Breast epithelium (tissue), 4 donors: ENCODE measurements at regions of chr18 and their contacts with region 1.

Region 1: GRCh38 chr18:57190026-57190425 is 43.1 kb downstream of the BOD1L2 start:
- DNase-seq: no peak
- H3K4me3 ChIP-seq: no peak overlapping the region
- H3K27ac ChIP-seq: no peak overlapping the region
- H3K4me1 ChIP-seq: no peaks in the 10 kb centered on the region
- H3K27me3 ChIP-seq: no peaks in the 10 kb centered on the region
- CTCF ChIP-seq: no peak
- POLR2A ChIP-seq: no peak

Region 2: DNA sequence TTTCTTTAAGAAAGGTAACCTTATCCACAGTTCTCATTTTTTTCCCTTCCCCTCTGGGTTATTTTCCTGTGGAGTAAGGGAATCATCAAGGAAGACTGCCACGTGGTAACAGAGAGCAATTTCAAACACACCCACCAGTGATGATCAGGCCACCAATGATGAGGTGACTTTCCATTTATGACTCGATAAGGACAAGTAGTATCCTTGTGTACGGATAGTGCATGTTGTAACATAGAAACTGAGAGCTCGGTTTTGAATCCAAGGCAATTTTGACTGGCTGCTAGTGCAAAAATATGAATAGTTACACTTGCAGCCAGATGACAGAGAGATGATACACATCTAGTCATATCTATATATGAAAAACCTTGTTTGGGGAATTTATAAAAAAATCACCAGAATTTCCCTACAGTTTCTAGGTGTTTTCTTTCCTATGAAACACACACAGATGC is 1458.4 kb before region 1 on chr18:
- intact Hi-C with region 1: no loop called
- DNase-seq: no peak
- H3K4me3 ChIP-seq: no peak overlapping the region
- H3K27ac ChIP-seq: no peak overlapping the region
- H3K4me1 ChIP-seq: no peaks in the 10 kb centered on the region
- H3K27me3 ChIP-seq: no peaks in the 10 kb centered on the region
- CTCF ChIP-seq: no peak
- POLR2A ChIP-seq: no peak

Region 3: DNA sequence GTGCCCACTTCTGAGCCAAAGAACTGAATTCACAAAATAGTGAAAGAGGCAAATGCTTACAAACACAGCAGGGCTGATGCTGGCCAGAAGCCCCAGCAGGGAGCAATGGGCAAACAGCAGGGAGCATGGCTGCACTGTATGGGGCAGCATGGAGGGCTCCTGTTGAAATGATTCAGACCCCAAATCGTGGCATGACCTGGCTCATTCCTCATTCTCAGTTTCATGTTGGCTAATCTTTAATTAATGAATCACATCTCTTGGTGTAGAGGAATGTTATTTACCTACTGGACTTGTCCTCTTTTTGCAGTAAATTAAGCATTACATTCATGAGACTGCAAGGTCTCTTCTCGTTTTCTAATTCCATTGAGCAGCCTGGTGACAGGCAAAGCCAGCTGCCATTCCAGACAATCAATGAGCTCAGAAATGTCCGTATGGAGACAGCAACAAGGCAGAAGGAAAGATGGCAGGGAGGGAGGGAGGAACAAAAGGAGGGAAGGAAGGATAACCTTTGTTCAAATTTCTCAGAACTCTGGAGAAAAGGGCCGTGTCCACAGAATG is 77.4 kb after region 1 on chr18:
- intact Hi-C with region 1: loop called (anchors 2 kb)
- DNase-seq: no peak
- H3K4me3 ChIP-seq: no peak overlapping the region
- H3K27ac ChIP-seq: no peak overlapping the region
- H3K4me1 ChIP-seq: no peaks in the 10 kb centered on the region
- H3K27me3 ChIP-seq: no peaks in the 10 kb centered on the region
- CTCF ChIP-seq: no peak
- POLR2A ChIP-seq: no peak